Aorta (tissue), 5 donors: ENCODE measurements at regions of chr14 and their contacts with region 1.

Region 1: DNA sequence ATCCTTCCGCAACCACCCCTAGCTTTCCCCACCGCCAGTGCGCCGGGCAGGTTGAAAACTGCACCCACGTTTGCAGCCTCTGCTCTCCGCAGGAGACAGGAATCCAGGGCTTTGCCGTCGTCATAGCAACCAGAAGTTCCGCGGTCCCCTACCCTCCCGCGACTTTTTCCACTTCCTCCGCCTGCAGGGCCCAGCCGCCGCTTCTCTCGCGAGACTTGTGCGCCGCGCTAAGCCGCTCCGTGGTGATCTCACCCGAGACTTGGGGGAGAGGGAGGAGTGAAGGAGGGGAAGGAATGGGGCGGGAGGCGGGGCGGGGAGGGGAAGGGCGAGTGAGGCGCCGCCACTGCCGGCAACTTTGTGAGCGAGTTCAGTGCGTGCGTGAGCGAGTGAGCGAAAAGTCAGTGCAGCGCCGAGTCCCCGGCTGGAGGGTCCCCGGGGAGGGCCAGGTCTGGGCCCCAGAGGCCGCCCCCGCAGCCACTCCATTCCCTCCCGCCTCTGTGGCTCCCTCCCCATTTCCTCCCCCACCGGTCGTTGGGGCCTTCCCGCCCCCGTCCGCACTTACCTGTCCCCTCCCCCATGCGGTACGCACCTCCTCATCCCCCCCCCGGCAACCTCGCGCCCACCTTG is 413.0 kb downstream of the PCNX1 start:
- DNase-seq: peak; percentile 99 to 100
- ATAC-seq: peak; percentile 97
- H3K4me3 ChIP-seq: peak within 1 kb of the TSS; percentile 92 to 98
- H3K27ac ChIP-seq: peak within 1 kb of the TSS; percentile 83 to 94
- H3K4me1 ChIP-seq: no peaks in the 10 kb centered on the region
- H3K27me3 ChIP-seq: no peaks in the 10 kb centered on the region

Region 2: GRCh38 chr14:69428289-69428998 is 1891.8 kb before region 1 on chr14:
- intact Hi-C with region 1: no loop called
- DNase-seq: no peak
- ATAC-seq: no peak
- H3K4me3 ChIP-seq: no peak overlapping the region
- H3K27ac ChIP-seq: no peak overlapping the region
- H3K4me1 ChIP-seq: no peaks in the 10 kb centered on the region
- H3K27me3 ChIP-seq: no peaks in the 10 kb centered on the region

Region 3: GRCh38 chr14:71021347-71022014 is 298.7 kb before region 1 on chr14:
- intact Hi-C with region 1: no loop called
- DNase-seq: no peak
- ATAC-seq: no peak
- H3K4me3 ChIP-seq: no peak overlapping the region
- H3K27ac ChIP-seq: no peak overlapping the region
- H3K4me1 ChIP-seq: no peaks in the 10 kb centered on the region
- H3K27me3 ChIP-seq: no peaks in the 10 kb centered on the region

Region 4: DNA sequence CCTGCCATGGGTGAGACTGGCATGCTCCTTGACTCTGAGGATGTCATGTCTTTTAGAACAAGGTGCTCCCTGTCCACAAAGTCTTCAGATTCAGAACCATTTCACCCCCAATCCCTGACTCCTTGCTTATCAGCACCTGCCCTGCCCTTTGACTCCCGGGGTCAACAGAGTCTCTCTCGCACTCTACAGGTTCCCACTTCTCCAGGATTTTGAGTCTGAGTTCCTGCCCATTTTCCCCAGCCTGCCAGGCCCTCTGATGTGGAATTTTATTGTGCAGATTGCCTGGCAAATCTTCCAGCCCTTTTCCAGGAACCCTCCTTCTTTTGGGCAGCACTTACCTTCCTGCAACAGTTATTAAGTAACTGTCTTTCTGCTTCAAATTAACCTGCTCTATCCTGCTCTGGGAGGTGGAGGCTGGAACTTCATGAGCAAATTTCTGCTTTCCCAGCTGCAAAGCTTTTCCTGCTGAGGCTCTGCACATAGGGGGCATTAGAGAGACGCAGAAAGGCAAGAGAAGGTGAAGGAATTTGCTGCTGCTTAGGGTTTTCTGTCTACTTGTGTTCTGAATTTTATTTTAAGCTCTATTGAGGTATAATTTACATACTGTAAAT is 153.9 kb before region 1 on chr14:
- intact Hi-C with region 1: loop called in 1 of 2 experiments (anchors 5 kb)
- DNase-seq: no peak
- ATAC-seq: no peak
- H3K4me3 ChIP-seq: no peak overlapping the region
- H3K27ac ChIP-seq: no peak overlapping the region
- H3K4me1 ChIP-seq: no peaks in the 10 kb centered on the region
- H3K27me3 ChIP-seq: no peaks in the 10 kb centered on the region

Region 5: GRCh38 chr14:71403656-71404055 is 83.4 kb after region 1 on chr14:
- intact Hi-C with region 1: loop called (anchors 5 kb)
- DNase-seq: no peak
- ATAC-seq: no peak
- H3K4me3 ChIP-seq: no peak overlapping the region
- H3K27ac ChIP-seq: no peak overlapping the region
- H3K4me1 ChIP-seq: peaks cover 1 to 4% of the 10 kb centered on the region in 2 donors
- H3K27me3 ChIP-seq: no peaks in the 10 kb centered on the region

Region 6: GRCh38 chr14:71529848-71530247 is 209.6 kb after region 1 on chr14:
- intact Hi-C with region 1: loop called (anchors 5 to 10 kb)
- DNase-seq: peak in 1 of 2 donors; percentile 78
- ATAC-seq: peak; percentile 90
- H3K4me3 ChIP-seq: no peak overlapping the region
- H3K27ac ChIP-seq: peak overlapping the region in 1 of 2 donors; percentile 73
- H3K4me1 ChIP-seq: peaks cover 0 to 4% of the 10 kb centered on the region in 2 donors
- H3K27me3 ChIP-seq: no peaks in the 10 kb centered on the region

Region 7: GRCh38 chr14:71753126-71753830 is 433.1 kb after region 1 on chr14:
- intact Hi-C with region 1: loop called (anchors 2 to 5 kb)
- DNase-seq: peak; percentile 92 to 96
- ATAC-seq: peak; percentile 92
- H3K4me3 ChIP-seq: no peak overlapping the region
- H3K27ac ChIP-seq: no peak overlapping the region
- H3K4me1 ChIP-seq: no peaks in the 10 kb centered on the region
- H3K27me3 ChIP-seq: no peaks in the 10 kb centered on the region